ENCODE measurements at regions of chr9 and their contacts with region 1.

Region 1: GRCh38 chr9:136769710-136770191 is 5.4 kb upstream of the LCN15 start:
- DNase-seq: peak in 1 of 2 experiments; percentile 88
- H3K4me3 ChIP-seq: peak overlapping the region in 2 of 4 experiments; percentile 20 to 56; a peak in 3 of 8 replicates
- H3K27ac ChIP-seq: no peak overlapping the region
- H3K4me1 ChIP-seq: no peaks in the 10 kb centered on the region
- H3K27me3 ChIP-seq: no peaks in the 10 kb centered on the region
- CTCF ChIP-seq: peak; percentile 57 to 93 (median 72)
- EP300 ChIP-seq: no peak
- POLR2A ChIP-seq: no peak
- RAD21 ChIP-seq: peak in 1 of 2 experiments; percentile 11; a peak in 2 of 4 replicates

Region 2: GRCh38 chr9:136757328-136757727 is 12.4 kb before region 1 on chr9:
- CTCF ChIA-PET with region 1: interaction called, 42 read pairs
- POLR2A ChIA-PET with region 1: no interaction called
- DNase-seq: no peak
- H3K4me3 ChIP-seq: no peak overlapping the region
- H3K27ac ChIP-seq: no peak overlapping the region
- H3K4me1 ChIP-seq: peaks cover 0 to 6% (median 2%) of the 10 kb centered on the region in 4 experiments; a peak in 4 of 7 replicates
- H3K27me3 ChIP-seq: no peaks in the 10 kb centered on the region
- CTCF ChIP-seq: no peak
- EP300 ChIP-seq: no peak
- POLR2A ChIP-seq: no peak
- RAD21 ChIP-seq: no peak

Region 3: DNA sequence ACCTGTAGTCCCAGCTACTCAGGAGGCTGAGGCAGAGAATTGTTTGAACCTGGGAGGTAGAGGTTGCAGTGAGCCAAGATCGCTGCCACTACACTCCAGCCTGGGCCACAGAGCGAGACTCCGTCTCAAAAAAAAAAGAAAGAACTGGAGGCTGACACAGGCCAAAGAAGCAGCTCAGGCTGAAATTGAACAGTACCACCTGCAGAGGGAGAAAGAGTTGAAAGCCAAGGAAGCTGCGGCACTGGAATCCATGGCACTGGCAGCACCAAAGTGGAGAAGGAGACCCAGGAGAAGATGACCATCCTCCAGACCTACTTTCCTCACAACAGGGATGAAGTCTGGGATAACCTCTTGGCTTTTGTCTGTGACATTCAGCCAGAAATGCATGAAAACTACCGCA is 10.1 kb after region 1 on chr9:
- CTCF ChIA-PET with region 1: interaction called, 88 read pairs
- POLR2A ChIA-PET with region 1: interaction called, 5 read pairs
- DNase-seq: no peak
- H3K4me3 ChIP-seq: no peak overlapping the region
- H3K27ac ChIP-seq: no peak overlapping the region
- H3K4me1 ChIP-seq: no peaks in the 10 kb centered on the region
- H3K27me3 ChIP-seq: peaks cover 0 to 4% (median 1%) of the 10 kb centered on the region in 4 experiments; a peak in 3 of 7 replicates
- CTCF ChIP-seq: peak in 1 of 3 experiments; percentile 15; a peak in 1 of 4 replicates
- EP300 ChIP-seq: no peak
- POLR2A ChIP-seq: no peak
- RAD21 ChIP-seq: no peak

Region 4: DNA sequence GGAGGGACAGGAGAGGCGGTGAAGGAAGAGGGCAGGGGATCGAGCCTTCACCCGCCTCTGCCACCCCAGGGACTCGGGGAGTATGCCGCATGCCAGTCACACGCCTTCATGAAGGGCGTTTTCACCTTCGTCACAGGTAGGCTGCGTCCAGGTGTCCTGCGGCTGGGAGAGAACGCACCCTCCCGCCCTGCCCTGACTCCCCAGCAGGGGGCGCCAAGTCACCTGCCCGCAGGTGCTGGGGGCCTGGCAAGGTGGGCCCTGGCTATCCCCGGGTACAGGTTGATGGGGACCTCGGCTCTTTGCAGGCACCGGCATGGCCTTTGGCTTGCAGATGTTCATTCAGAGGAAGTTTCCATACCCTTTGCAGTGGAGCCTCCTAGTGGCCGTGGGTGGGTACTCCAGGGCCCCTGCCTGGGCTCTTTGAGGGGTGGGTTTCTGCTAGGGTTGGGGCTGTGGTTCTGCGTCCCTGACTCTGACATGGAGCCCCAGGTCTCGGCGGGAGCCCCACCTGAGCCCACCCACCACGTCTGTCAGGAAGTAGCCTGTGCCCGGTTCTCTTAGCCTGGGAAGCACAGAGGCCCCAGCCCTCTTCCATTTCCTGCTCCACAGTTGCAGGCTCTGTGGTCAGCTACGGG is 22.0 kb after region 1 on chr9:
- CTCF ChIA-PET with region 1: interaction called, 37 read pairs
- POLR2A ChIA-PET with region 1: no interaction called
- DNase-seq: peak in 1 of 2 experiments; percentile 91
- H3K4me3 ChIP-seq: peak overlapping the region; percentile 61 to 84 (median 81)
- H3K27ac ChIP-seq: peak overlapping the region; percentile 78
- H3K4me1 ChIP-seq: peaks cover 0 to 11% (median 5%) of the 10 kb centered on the region in 4 experiments; a peak in 4 of 7 replicates
- H3K27me3 ChIP-seq: no peaks in the 10 kb centered on the region
- CTCF ChIP-seq: peak in 2 of 3 experiments; percentile 85 to 91; a peak in 3 of 4 replicates
- EP300 ChIP-seq: no peak; a peak in 1 of 3 replicates
- POLR2A ChIP-seq: no peak
- RAD21 ChIP-seq: peak; percentile 49 to 63

Region 5: GRCh38 chr9:137029058-137029936 is 259.5 kb after region 1 on chr9:
- CTCF ChIA-PET with region 1: no interaction called
- POLR2A ChIA-PET with region 1: no interaction called
- DNase-seq: peak in 1 of 2 experiments; percentile 98
- H3K4me3 ChIP-seq: peak overlapping the region in 1 of 4 experiments; percentile 78; a peak in 4 of 8 replicates
- H3K27ac ChIP-seq: no peak overlapping the region
- H3K4me1 ChIP-seq: peaks cover 0 to 11% (median 3%) of the 10 kb centered on the region in 4 experiments; a peak in 5 of 7 replicates
- H3K27me3 ChIP-seq: peaks cover 1 to 27% (median 15%) of the 10 kb centered on the region in 4 experiments; a peak in 6 of 7 replicates
- CTCF ChIP-seq: peak in 2 of 3 experiments; percentile 94 to 98; a peak in 3 of 4 replicates
- EP300 ChIP-seq: no peak
- POLR2A ChIP-seq: no peak
- RAD21 ChIP-seq: peak; percentile 42 to 64

Measured in H1 (cell line).